SK-MEL-5 (cell line): ENCODE measurements at regions of chr1 and their contacts with region 1.

Region 1: GRCh38 chr1:111769517-111770146 is 13.9 kb downstream of the DDX20 start:
- DNase-seq: peak; percentile 77

Region 2: GRCh38 chr1:111476761-111477309 is 292.8 kb before region 1 on chr1:
- in situ Hi-C with region 1: loop called (anchors 10 kb)
- DNase-seq: no peak

Region 3: GRCh38 chr1:111624382-111624781 is 145.2 kb before region 1 on chr1:
- in situ Hi-C with region 1: no loop called
- DNase-seq: no peak